ENCODE measurements at regions of chr17 and their contacts with region 1.

Region 1: GRCh38 chr17:34254651-34255380 is at the start of gene CCL2:
- DNase-seq: peak in 2 of 3 donors; percentile 30 to 49
- H3K4me3 ChIP-seq: peak within 1 kb of the TSS in 1 of 3 experiments; percentile 59
- H3K4me3 Mint-ChIP-seq: peak within 1 kb of the TSS; percentile 61 to 83
- H3K27ac ChIP-seq: no peak within 1 kb of the TSS
- H3K27ac Mint-ChIP-seq: peak within 1 kb of the TSS in 6 of 7 donors; percentile 19 to 71 (median 60)
- H3K4me1 ChIP-seq: peaks cover 46 to 48% of the 10 kb centered on the region in 2 donors
- H3K4me1 Mint-ChIP-seq: peaks cover 52% of the 10 kb centered on the region
- H3K27me3 ChIP-seq: no peaks in the 10 kb centered on the region
- H3K27me3 Mint-ChIP-seq: peaks cover 0 to 6% (median 3%) of the 10 kb centered on the region in 3 donors
- CTCF ChIP-seq: no peak
- polyA plus RNA-seq, gene CCL2: 1.4 to 44.9 (median 17.7) TPM

Region 2: DNA sequence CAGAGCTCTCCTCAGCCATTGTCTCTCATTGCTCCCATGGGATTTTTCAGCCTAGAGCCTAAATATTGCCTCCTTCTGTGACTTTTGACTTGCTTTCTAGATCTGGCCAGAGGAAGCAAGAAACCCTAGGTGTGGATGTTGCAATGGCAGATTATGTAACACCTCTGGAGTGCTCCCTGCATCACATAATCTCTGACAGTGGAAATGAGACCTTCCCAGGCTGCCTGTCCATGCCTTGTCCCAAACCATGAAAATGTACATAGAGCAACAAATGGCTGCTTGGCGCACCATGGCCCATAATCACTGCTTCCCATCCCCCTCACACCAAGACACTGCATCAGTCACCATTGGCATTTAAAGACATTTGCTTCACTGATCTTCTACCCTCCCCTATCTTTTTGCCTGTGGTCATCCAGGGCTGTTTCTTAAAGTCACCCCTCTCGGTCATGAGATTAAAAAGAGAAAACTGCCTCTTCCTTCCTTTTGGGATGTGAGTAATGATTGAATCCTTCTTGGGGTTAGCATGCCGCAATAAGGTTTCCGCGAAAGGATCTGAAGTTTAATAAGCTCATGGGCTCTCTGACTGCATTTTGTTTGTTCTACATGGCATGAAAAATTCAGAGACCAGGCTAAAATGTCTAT is 33.9 kb before region 1 on chr17:
- intact Hi-C with region 1: loop called in 1 of 2 experiments (anchors 5 kb)
- DNase-seq: peak; percentile 66 to 86 (median 82)
- H3K4me3 ChIP-seq: peak overlapping the region in 1 of 3 experiments; percentile 26
- H3K4me3 Mint-ChIP-seq: peak overlapping the region; percentile 4 to 47
- H3K27ac ChIP-seq: peak overlapping the region; percentile 35 to 60
- H3K27ac Mint-ChIP-seq: peak overlapping the region; percentile 25 to 95 (median 91)
- H3K4me1 ChIP-seq: peaks cover 60 to 61% of the 10 kb centered on the region in 2 donors
- H3K4me1 Mint-ChIP-seq: peaks cover 66% of the 10 kb centered on the region
- H3K27me3 ChIP-seq: no peaks in the 10 kb centered on the region
- H3K27me3 Mint-ChIP-seq: peaks cover 0 to 3% (median 3%) of the 10 kb centered on the region in 3 donors
- CTCF ChIP-seq: no peak

Region 3: DNA sequence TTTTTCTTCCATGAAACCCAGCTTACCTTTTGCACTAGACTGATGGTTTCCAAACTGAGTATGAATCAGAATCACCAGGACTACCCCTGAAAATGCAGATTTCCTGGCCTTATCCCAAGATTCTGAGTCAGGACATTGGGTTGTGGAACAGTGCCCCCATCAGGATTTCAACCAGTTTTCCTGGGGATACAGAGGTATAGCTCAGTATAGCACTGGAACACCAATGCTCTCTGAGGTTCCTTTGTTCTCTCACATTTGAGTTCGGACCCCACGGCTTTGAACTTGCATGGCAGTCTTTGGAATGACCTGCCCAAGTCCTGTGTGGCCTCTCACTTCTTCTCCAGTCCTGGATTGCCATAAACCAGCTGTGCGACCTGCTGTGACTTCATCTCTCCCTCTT is 51.6 kb after region 1 on chr17:
- intact Hi-C with region 1: loop called (anchors 2 to 10 kb)
- DNase-seq: peak in 1 of 3 donors; percentile 63
- H3K4me3 ChIP-seq: peak overlapping the region in 1 of 3 experiments; percentile 34
- H3K4me3 Mint-ChIP-seq: no peak overlapping the region
- H3K27ac ChIP-seq: peak overlapping the region in 1 of 2 donors; percentile 77
- H3K27ac Mint-ChIP-seq: peak overlapping the region; percentile 80 to 94 (median 90)
- H3K4me1 ChIP-seq: peaks cover 49 to 54% of the 10 kb centered on the region in 2 donors
- H3K4me1 Mint-ChIP-seq: peaks cover 59% of the 10 kb centered on the region
- H3K27me3 ChIP-seq: no peaks in the 10 kb centered on the region
- H3K27me3 Mint-ChIP-seq: peaks cover 0 to 2% (median 0%) of the 10 kb centered on the region in 3 donors
- CTCF ChIP-seq: no peak

Region 4: GRCh38 chr17:34318474-34318873 is 63.7 kb after region 1 on chr17:
- intact Hi-C with region 1: loop called in 1 of 2 experiments (anchors 10 kb)
- DNase-seq: peak in 2 of 3 donors; percentile 42 to 56
- H3K4me3 ChIP-seq: no peak overlapping the region
- H3K4me3 Mint-ChIP-seq: no peak overlapping the region
- H3K27ac ChIP-seq: peak overlapping the region in 1 of 2 donors; percentile 16
- H3K27ac Mint-ChIP-seq: peak overlapping the region in 3 of 7 donors; percentile 3 to 51 (median 13)
- H3K4me1 ChIP-seq: peaks cover 36 to 38% of the 10 kb centered on the region in 2 donors
- H3K4me1 Mint-ChIP-seq: peaks cover 41% of the 10 kb centered on the region
- H3K27me3 ChIP-seq: no peaks in the 10 kb centered on the region
- H3K27me3 Mint-ChIP-seq: peaks cover 0 to 1% (median 0%) of the 10 kb centered on the region in 3 donors
- CTCF ChIP-seq: peak; percentile 65

Region 5: GRCh38 chr17:34361478-34362061 is 106.8 kb after region 1 on chr17:
- intact Hi-C with region 1: loop called in 1 of 2 experiments (anchors 5 kb)
- DNase-seq: peak; percentile 82 to 94 (median 89)
- H3K4me3 ChIP-seq: no peak overlapping the region
- H3K4me3 Mint-ChIP-seq: no peak overlapping the region
- H3K27ac ChIP-seq: no peak overlapping the region
- H3K27ac Mint-ChIP-seq: peak overlapping the region in 1 of 7 donors; percentile 3
- H3K4me1 ChIP-seq: peaks cover 20 to 33% of the 10 kb centered on the region in 2 donors
- H3K4me1 Mint-ChIP-seq: peaks cover 24% of the 10 kb centered on the region
- H3K27me3 ChIP-seq: no peaks in the 10 kb centered on the region
- H3K27me3 Mint-ChIP-seq: peaks cover 0 to 2% (median 2%) of the 10 kb centered on the region in 3 donors
- CTCF ChIP-seq: peak; percentile 100